Psoas muscle (tissue), 8 donors: ENCODE measurements at regions of chr9 and their contacts with region 1.

Region 1: DNA sequence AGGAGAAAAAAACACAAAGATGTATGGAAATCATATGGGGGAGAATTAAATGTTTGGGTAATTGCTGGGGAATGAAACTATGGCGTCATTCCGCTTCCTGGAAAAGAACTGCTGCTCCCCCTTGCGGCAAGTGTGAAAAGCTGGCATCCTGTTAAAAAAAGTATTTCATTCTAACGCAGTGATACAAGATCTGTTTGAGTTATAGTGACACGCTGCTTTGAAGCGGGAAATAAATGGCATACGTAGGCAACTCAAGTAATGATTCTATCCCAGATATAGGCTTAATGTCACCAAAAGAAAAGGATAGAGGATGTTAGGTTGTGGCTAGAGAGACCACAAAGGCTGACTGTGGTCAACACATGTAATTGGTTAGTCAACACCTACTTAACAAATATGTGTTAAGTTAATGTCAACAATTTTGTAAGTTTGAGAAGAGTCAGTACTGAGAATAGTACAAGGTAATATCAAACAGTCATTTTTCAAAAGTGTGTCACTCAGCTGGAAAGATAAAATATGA is 70.2 kb upstream of the ALDH1A1 start:
- DNase-seq: peak; percentile 47 to 62
- ATAC-seq: peak; percentile 54 to 96 (median 79)
- H3K4me3 ChIP-seq: no peak overlapping the region
- H3K27ac ChIP-seq: no peak overlapping the region
- H3K4me1 ChIP-seq: no peaks in the 10 kb centered on the region
- H3K27me3 ChIP-seq: no peaks in the 10 kb centered on the region
- CTCF ChIP-seq: peak; percentile 88

Region 2: GRCh38 chr9:72856972-72857623 is 166.0 kb before region 1 on chr9:
- intact Hi-C with region 1: loop called in 1 of 2 experiments (anchors 1 kb)
- DNase-seq: no peak
- ATAC-seq: peak in 3 of 4 donors; percentile 53 to 83 (median 67)
- H3K4me3 ChIP-seq: no peak overlapping the region
- H3K27ac ChIP-seq: no peak overlapping the region
- H3K4me1 ChIP-seq: peaks cover 21% of the 10 kb centered on the region
- H3K27me3 ChIP-seq: no peaks in the 10 kb centered on the region
- CTCF ChIP-seq: peak; percentile 64

Region 3: GRCh38 chr9:72871685-72872084 is 151.4 kb before region 1 on chr9:
- intact Hi-C with region 1: loop called in 1 of 2 experiments (anchors 5 kb)
- DNase-seq: no peak
- ATAC-seq: peak in 2 of 4 donors; percentile 51 to 76
- H3K4me3 ChIP-seq: peak overlapping the region; percentile 40
- H3K27ac ChIP-seq: no peak overlapping the region
- H3K4me1 ChIP-seq: peaks cover 8% of the 10 kb centered on the region
- H3K27me3 ChIP-seq: no peaks in the 10 kb centered on the region
- CTCF ChIP-seq: peak; percentile 60

Region 4: GRCh38 chr9:72882117-72882775 is 140.8 kb before region 1 on chr9:
- intact Hi-C with region 1: loop called in 1 of 2 experiments (anchors 5 kb)
- DNase-seq: peak; percentile 23 to 76
- ATAC-seq: peak; percentile 65 to 99 (median 96)
- H3K4me3 ChIP-seq: no peak overlapping the region
- H3K27ac ChIP-seq: peak overlapping the region; percentile 46
- H3K4me1 ChIP-seq: peaks cover 9% of the 10 kb centered on the region
- H3K27me3 ChIP-seq: no peaks in the 10 kb centered on the region
- CTCF ChIP-seq: no peak

Region 5: GRCh38 chr9:72984991-72985390 is 38.1 kb before region 1 on chr9:
- intact Hi-C with region 1: no loop called
- DNase-seq: peak in 1 of 2 donors; percentile 66
- ATAC-seq: peak; percentile 77 to 99 (median 94)
- H3K4me3 ChIP-seq: no peak overlapping the region
- H3K27ac ChIP-seq: peak overlapping the region; percentile 13
- H3K4me1 ChIP-seq: peaks cover 7% of the 10 kb centered on the region
- H3K27me3 ChIP-seq: no peaks in the 10 kb centered on the region
- CTCF ChIP-seq: no peak

Region 6: DNA sequence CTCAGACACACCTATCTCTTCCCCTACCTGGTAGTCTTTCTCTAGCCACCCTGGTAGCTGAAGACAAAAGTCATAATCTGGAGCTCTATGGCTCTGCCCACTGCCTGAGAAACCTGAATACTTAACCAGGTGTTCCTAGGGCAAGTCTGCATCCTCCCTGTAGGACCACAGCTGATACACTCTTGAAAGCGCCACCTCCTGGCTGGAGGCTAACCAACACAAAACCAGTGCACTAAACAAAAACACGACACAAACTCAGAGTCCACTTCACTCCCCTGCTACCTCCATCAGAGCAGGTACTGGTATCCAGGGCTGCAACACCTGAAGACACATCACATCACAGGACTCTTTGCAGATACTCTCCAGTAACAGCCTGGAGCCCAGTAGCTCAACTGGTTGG is 44.0 kb after region 1 on chr9:
- intact Hi-C with region 1: no loop called
- DNase-seq: no peak
- ATAC-seq: no peak
- H3K4me3 ChIP-seq: no peak overlapping the region
- H3K27ac ChIP-seq: no peak overlapping the region
- H3K4me1 ChIP-seq: no peaks in the 10 kb centered on the region
- H3K27me3 ChIP-seq: no peaks in the 10 kb centered on the region
- CTCF ChIP-seq: no peak